Calu3 (cell line): ENCODE measurements at regions of chr17 and their contacts with region 1.

Region 1: GRCh38 chr17:49361902-49362722 is at the start of gene ZNF652:
- DNase-seq: peak; percentile 100
- H3K4me3 Mint-ChIP-seq: peak within 1 kb of the TSS; percentile 74
- H3K27ac Mint-ChIP-seq: peak within 1 kb of the TSS; percentile 88
- H3K4me1 Mint-ChIP-seq: peaks cover 36% of the 10 kb centered on the region
- H3K27me3 Mint-ChIP-seq: no peaks in the 10 kb centered on the region
- CTCF ChIP-seq: no peak
- total RNA-seq, gene ZNF652: 41.9 and 42.8 TPM in 2 replicates

Region 2: DNA sequence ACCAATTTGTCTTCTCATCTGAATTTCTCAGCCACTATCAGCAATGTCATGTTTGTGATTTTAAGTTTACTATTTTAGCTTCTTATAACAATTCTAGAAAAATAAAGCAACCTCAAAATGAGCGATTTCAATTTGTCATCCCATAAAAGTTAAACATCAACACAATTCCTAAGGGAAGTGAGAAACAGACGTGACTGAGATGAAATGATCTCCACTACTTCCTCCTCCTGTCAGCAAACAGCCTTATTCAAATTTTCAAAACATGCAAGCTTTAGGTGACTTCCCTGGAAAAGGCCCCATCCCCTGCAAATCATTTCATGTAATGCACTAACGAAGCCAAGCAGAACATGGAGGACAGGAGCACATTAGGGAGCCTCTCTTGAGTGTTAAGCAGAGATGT is 65.0 kb before region 1 on chr17:
- CTCF ChIA-PET with region 1: no interaction called
- intact Hi-C with region 1: no loop called
- DNase-seq: no peak
- H3K4me3 Mint-ChIP-seq: no peak overlapping the region
- H3K27ac Mint-ChIP-seq: no peak overlapping the region
- H3K4me1 Mint-ChIP-seq: no peaks in the 10 kb centered on the region
- H3K27me3 Mint-ChIP-seq: no peaks in the 10 kb centered on the region
- CTCF ChIP-seq: no peak

Region 3: DNA sequence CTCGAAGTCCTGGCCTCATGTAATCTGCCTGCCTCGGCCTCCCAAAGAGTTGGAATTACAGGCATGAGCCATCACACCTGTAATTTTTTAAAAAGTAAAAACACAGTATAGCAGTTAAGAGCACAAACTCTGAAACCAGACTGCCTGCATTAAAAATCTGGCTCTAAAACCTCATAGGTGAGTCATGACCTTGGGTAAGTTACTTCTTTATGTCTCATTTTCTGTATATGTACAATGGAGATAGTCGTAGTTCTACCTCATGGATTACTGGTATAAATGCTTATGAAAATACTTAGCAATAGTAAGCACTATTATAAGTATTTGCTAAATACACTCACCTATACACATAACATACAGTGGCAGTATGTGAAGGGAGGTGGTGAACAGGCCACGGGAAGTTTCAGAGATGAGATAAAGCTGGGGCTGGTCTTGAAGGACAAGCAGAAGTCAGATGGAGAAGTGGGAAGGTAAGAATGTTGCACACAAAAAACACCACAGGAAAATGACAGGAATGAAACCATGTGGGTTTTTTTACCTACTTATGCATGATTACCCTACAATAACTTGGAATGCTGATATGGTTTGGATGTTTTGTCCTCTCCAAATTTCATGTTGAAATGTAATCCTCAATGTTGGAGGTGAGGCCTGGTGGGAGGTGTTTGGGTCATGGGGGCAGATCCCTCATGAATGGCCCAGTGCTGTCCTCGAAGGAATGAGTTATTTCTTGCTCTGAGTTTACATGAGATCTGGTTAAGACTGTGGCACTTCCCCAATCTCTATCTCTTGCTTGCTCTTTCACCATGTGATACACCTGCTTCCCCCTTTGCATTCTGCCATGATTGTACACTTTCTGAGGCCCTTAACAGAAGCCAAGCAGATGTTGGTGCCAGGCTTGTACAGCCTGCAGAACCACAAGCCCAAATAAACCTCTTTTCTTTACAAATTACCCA is 34.0 kb before region 1 on chr17:
- CTCF ChIA-PET with region 1: interaction called, 13 read pairs
- intact Hi-C with region 1: no loop called
- DNase-seq: no peak
- H3K4me3 Mint-ChIP-seq: no peak overlapping the region
- H3K27ac Mint-ChIP-seq: no peak overlapping the region
- H3K4me1 Mint-ChIP-seq: no peaks in the 10 kb centered on the region
- H3K27me3 Mint-ChIP-seq: no peaks in the 10 kb centered on the region
- CTCF ChIP-seq: no peak

Region 4: GRCh38 chr17:49390548-49391324 is 28.6 kb after region 1 on chr17:
- CTCF ChIA-PET with region 1: interaction called, 5 read pairs
- intact Hi-C with region 1: loop called (anchors 2 kb)
- DNase-seq: peak; percentile 52
- H3K4me3 Mint-ChIP-seq: no peak overlapping the region
- H3K27ac Mint-ChIP-seq: peak overlapping the region; percentile 2
- H3K4me1 Mint-ChIP-seq: peaks cover 14% of the 10 kb centered on the region
- H3K27me3 Mint-ChIP-seq: peaks cover 13% of the 10 kb centered on the region
- CTCF ChIP-seq: no peak

Region 5: GRCh38 chr17:49434821-49435670 is 72.9 kb after region 1 on chr17:
- CTCF ChIA-PET with region 1: no interaction called
- intact Hi-C with region 1: no loop called
- DNase-seq: peak; percentile 81
- H3K4me3 Mint-ChIP-seq: no peak overlapping the region
- H3K27ac Mint-ChIP-seq: no peak overlapping the region
- H3K4me1 Mint-ChIP-seq: no peaks in the 10 kb centered on the region
- H3K27me3 Mint-ChIP-seq: peaks cover 65% of the 10 kb centered on the region
- CTCF ChIP-seq: peak; percentile 93